ENCODE measurements at regions of chr13 and their contacts with region 1.

Region 1: GRCh38 chr13:110715395-110716235 is 2.1 kb downstream of the ING1 start:
- DNase-seq: peak; percentile 97 to 100
- H3K4me3 ChIP-seq: peak overlapping the region; percentile 95
- H3K27ac ChIP-seq: peak overlapping the region; percentile 48
- H3K4me1 ChIP-seq: peaks cover 28% of the 10 kb centered on the region
- H3K27me3 ChIP-seq: no peaks in the 10 kb centered on the region
- CTCF ChIP-seq: no peak

Region 2: GRCh38 chr13:109256866-109257760 is 1458.5 kb before region 1 on chr13:
- CTCF ChIA-PET with region 1: no interaction called
- POLR2A ChIA-PET with region 1: interaction called, 12 read pairs
- intact Hi-C with region 1: no loop called
- DNase-seq: peak; percentile 63 to 100
- H3K4me3 ChIP-seq: peak overlapping the region; percentile 10; the same call in 1 of the 2 replicates
- H3K27ac ChIP-seq: peak overlapping the region; percentile 97
- H3K4me1 ChIP-seq: peaks cover 57% of the 10 kb centered on the region
- H3K27me3 ChIP-seq: no peaks in the 10 kb centered on the region
- CTCF ChIP-seq: no peak

Region 3: DNA sequence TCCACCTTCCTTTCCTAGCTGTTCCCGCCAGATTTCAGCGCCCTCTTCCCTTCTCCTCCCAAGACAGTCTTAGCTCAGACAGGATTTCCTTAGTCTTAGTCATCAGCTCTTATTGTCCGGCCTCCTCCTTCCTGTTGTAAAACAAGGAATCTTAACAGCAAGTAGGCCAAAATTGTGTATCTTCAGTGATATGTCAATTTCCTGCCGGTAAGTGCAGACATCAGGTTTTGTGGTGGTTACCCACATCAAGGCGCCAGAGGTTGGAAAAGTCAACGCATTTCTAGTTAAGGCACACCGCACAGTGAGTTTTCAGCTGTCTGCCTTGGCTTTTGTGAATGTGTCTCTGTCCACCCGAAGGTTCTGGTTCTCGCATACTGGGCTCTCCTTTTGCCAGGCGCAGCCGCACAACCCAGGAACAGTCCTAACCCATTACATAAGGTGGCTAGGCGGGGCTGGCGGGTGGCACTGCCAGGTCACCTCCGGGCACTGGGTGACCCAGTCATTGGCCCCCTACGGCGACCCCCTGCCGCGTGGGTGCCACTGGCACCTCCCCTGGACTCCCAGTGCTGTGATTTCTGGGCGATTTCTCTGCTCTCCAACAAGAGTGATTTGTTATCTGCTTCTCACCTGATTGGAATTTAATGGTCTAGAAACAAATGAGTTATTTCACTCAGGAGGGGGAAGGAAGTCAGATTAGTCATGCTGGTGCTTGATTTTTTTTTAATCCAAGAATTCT is 395.7 kb before region 1 on chr13:
- CTCF ChIA-PET with region 1: no interaction called
- POLR2A ChIA-PET with region 1: no interaction called
- intact Hi-C with region 1: loop called (anchors 5 kb)
- DNase-seq: peak; percentile 89 to 99
- H3K4me3 ChIP-seq: peak overlapping the region; percentile 44; the same call in 1 of the 2 replicates
- H3K27ac ChIP-seq: peak overlapping the region; percentile 95
- H3K4me1 ChIP-seq: peaks cover 46% of the 10 kb centered on the region
- H3K27me3 ChIP-seq: no peaks in the 10 kb centered on the region
- CTCF ChIP-seq: no peak

Region 4: GRCh38 chr13:110593430-110594130 is 122.0 kb before region 1 on chr13:
- CTCF ChIA-PET with region 1: interaction called, 4 read pairs
- POLR2A ChIA-PET with region 1: interaction called, 5 read pairs
- intact Hi-C with region 1: loop called (anchors 10 kb)
- DNase-seq: peak in 1 of 2 experiments; percentile 59
- H3K4me3 ChIP-seq: no peak overlapping the region
- H3K27ac ChIP-seq: no peak overlapping the region
- H3K4me1 ChIP-seq: peaks cover 33% of the 10 kb centered on the region
- H3K27me3 ChIP-seq: no peaks in the 10 kb centered on the region
- CTCF ChIP-seq: peak; percentile 78

Region 5: DNA sequence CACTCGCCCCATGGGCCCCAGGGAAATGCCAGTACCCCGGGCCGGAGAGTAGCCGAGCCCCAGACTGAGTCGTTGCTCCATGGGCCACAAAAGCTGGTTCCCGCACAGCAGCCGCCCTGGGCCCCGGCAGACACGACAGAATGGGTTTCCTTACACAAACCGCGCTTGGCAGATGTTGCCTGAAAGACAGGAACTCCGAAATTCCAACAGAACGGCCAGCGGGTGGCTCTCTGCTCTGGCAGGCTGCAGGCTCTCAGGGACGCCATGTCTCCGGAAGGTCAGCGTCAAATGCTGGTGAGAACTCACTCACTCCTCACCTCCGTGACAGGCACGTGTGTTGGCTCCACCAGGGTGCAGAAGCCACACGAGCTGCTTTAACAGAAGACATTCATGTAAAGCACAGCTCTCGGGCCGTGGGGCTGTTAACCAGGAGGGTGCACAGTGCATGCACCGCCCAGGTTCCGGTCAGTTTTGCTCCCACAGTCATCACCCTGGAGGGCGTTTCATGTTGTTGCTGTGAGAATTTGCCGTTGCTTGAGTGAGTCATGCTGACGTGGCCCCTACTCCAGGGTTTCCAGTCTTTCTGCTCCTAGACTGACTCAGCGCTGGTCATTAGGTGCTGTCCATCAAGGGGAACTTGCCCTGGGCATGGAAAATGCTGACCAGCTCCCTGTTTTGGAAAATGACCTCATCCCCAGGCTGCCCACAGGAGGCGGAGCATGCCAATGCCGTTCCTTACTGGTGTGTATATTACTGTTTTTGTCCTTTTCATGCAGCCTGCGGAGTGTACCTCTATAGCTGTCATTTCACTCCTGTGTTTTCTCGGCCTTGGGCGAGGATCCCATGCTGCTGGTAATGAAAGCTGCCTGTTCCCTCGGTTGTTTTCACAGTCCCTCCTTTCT is 154.4 kb after region 1 on chr13:
- CTCF ChIA-PET with region 1: interaction called, 4 read pairs
- POLR2A ChIA-PET with region 1: interaction called, 12 read pairs
- intact Hi-C with region 1: loop called (anchors 1 kb)
- DNase-seq: peak; percentile 96 to 99
- H3K4me3 ChIP-seq: peak overlapping the region; percentile 65
- H3K27ac ChIP-seq: peak overlapping the region; percentile 97
- H3K4me1 ChIP-seq: peaks cover 28% of the 10 kb centered on the region
- H3K27me3 ChIP-seq: no peaks in the 10 kb centered on the region
- CTCF ChIP-seq: no peak

Region 6: DNA sequence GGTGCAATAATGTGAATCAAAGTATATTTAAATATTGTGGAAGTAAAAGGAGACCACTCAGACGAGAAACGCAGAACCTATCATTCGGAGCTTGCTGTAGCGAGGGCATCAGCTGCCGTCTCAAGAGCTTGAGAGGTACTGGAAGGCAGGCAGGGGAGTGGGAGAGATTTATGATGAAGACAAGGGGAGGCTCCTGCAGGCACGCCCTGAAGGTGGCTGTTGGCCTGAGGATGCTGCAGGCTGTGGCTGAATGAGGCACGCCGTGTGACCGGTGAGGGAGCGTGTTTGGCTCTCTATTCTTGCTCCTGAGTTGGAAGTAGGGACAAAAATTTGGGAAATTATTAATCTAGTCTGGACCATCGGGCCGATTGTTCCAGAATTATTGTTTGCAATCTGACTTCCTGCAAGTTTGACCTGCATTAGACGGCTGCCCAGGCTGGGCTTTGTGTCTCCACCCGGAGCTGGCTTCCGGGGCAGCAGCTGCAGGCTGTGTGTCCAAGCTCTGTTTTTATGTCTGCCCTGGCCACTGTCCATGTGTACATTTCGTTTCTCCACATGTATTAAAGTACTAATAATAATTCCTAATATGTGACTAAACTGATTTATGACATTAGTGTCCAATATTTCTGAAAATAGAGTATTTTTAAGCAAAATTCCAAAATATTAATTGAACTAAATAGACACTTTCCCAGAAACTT is 290.3 kb after region 1 on chr13:
- CTCF ChIA-PET with region 1: no interaction called
- POLR2A ChIA-PET with region 1: interaction called, 16 read pairs
- intact Hi-C with region 1: no loop called
- DNase-seq: no peak
- H3K4me3 ChIP-seq: no peak overlapping the region
- H3K27ac ChIP-seq: no peak overlapping the region
- H3K4me1 ChIP-seq: no peaks in the 10 kb centered on the region
- H3K27me3 ChIP-seq: no peaks in the 10 kb centered on the region
- CTCF ChIP-seq: no peak